B cell (primary cell): ENCODE measurements at regions of chr1 and their contacts with region 1.

Region 1: DNA sequence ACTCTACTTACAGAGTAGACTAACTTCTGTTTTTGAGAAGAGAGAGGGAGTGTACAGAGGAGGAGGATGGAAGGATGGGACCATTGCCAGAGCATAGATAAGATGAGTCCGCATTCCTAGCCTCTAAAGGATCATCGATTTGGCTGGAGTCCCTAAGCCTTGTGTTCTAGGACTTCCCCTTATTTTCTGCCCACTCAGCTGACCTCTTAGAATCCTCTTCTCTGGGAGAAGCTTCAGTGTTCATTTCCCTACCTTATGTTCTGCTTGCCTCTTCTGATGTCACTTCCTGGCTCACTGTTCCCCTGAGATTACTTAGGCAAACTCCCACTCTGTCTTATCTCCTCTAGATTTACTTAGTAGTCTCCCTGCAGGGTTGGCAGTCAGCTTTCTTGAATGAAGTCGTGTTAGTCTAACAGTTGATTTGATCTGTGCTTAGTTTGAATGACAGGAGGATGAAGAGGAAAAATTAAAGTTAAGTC is 156.7 kb downstream of the SYT2 start:
- DNase-seq: peak; percentile 69
- ATAC-seq: peak; percentile 96
- H3K4me3 ChIP-seq: no peak overlapping the region
- H3K4me3 Mint-ChIP-seq: peak overlapping the region; percentile 17
- H3K27ac ChIP-seq: peak overlapping the region in 1 of 2 donors; percentile 26
- H3K27ac Mint-ChIP-seq: peak overlapping the region; percentile 33
- H3K4me1 ChIP-seq: peaks cover 8 to 14% of the 10 kb centered on the region in 2 donors
- H3K4me1 Mint-ChIP-seq: peaks cover 17% of the 10 kb centered on the region
- H3K27me3 ChIP-seq: no peaks in the 10 kb centered on the region
- H3K27me3 Mint-ChIP-seq: no peaks in the 10 kb centered on the region
- CTCF ChIP-seq: no peak

Region 2: DNA sequence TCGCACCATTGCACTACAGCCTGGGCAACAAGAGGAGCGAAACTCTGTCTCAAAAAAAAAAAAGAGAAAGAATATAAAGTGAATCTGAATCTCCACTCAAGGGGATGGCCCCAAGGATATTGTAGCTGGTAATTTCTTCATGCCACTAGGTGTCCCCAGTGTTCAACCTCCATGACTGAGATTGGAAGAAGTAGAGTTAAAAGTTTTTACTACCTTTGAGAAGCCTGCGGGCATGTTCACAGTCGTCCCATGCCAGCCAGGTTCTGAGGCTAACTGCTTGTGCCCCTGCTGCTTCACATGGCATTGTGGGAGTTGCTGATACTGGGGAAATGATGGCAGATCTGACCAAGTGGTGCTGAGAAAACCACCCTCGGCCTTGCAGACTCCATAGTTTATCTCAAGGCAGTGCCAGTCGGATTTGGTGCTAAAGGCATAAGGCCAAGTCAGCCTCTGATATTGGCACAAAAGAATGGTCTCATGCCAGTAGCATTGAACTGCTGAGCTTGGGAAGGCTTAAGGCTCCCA is 675.7 kb before region 1 on chr1:
- CTCF ChIA-PET with region 1: no interaction called
- POLR2A ChIA-PET with region 1: no interaction called
- intact Hi-C with region 1: no loop called
- DNase-seq: peak; percentile 41
- ATAC-seq: no peak
- H3K4me3 ChIP-seq: no peak overlapping the region
- H3K4me3 Mint-ChIP-seq: no peak overlapping the region
- H3K27ac ChIP-seq: no peak overlapping the region
- H3K27ac Mint-ChIP-seq: no peak overlapping the region
- H3K4me1 ChIP-seq: peaks cover 6 to 7% of the 10 kb centered on the region in 2 donors
- H3K4me1 Mint-ChIP-seq: peaks cover 12% of the 10 kb centered on the region
- H3K27me3 ChIP-seq: no peaks in the 10 kb centered on the region
- H3K27me3 Mint-ChIP-seq: no peaks in the 10 kb centered on the region
- CTCF ChIP-seq: peak; percentile 58

Region 3: GRCh38 chr1:202516434-202516877 is 37.1 kb before region 1 on chr1:
- CTCF ChIA-PET with region 1: no interaction called
- POLR2A ChIA-PET with region 1: no interaction called
- intact Hi-C with region 1: loop called (anchors 5 kb)
- DNase-seq: no peak
- ATAC-seq: no peak
- H3K4me3 ChIP-seq: no peak overlapping the region
- H3K4me3 Mint-ChIP-seq: no peak overlapping the region
- H3K27ac ChIP-seq: no peak overlapping the region
- H3K27ac Mint-ChIP-seq: no peak overlapping the region
- H3K4me1 ChIP-seq: no peaks in the 10 kb centered on the region
- H3K4me1 Mint-ChIP-seq: peaks cover 10% of the 10 kb centered on the region
- H3K27me3 ChIP-seq: no peaks in the 10 kb centered on the region
- H3K27me3 Mint-ChIP-seq: no peaks in the 10 kb centered on the region
- CTCF ChIP-seq: no peak